ENCODE measurements at regions of chr15 and their contacts with region 1.

Region 1: DNA sequence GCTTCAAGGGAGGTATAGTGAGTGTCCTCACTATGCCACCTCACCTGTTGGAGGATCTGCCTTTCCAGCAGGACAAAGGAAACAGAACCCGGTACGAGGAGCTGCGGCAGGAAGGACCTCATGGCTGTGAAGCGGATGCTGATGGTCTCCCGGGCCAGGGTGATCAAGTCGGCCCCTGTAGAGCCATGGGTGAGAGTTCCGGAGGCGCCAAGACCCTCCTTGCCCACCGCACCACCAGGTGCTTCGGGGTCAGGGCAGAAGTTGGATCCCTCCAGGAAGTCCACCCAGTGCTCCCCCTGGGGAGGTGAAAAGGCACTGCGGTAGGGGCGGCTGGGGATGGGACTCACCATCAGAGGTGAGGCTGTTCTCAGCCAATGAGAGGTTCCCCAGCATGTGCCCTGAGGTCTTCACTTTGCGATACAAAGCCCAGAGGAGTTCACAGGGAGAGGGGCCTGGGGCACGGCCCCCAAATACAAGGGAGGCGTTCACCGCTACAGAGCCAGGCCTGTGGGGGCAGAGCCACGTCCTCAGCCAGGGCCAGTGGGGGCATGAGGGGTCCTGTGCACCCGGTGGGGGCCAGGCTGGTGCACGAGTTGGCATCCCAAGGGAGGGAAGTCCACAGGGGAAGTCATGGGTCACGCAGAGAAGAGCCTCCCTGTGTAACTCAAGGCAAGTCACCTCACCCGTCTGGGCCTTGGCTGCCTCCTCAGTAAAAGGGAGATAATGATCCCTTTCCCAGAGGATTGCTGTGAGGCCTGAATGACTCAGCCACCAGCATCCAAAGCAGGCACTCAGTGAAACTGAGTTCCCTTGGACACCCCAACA is 27.7 kb downstream of the C15orf39 start:
- DNase-seq: no peak
- ATAC-seq: no peak
- H3K4me3 ChIP-seq: no peak overlapping the region
- H3K27ac ChIP-seq: no peak overlapping the region
- H3K4me1 ChIP-seq: peaks cover 0 to 7% (median 0%) of the 10 kb centered on the region in 9 donors
- H3K27me3 ChIP-seq: peaks cover 0 to 16% (median 0%) of the 10 kb centered on the region in 7 donors
- CTCF ChIP-seq: no peak

Region 2: GRCh38 chr15:74565381-74566085 is 663.9 kb before region 1 on chr15:
- intact Hi-C with region 1: no loop called
- DNase-seq: no peak
- ATAC-seq: no peak
- H3K4me3 ChIP-seq: no peak overlapping the region
- H3K27ac ChIP-seq: no peak overlapping the region
- H3K4me1 ChIP-seq: peaks cover 0 to 12% (median 6%) of the 10 kb centered on the region in 9 donors
- H3K27me3 ChIP-seq: no peaks in the 10 kb centered on the region
- CTCF ChIP-seq: no peak

Region 3: DNA sequence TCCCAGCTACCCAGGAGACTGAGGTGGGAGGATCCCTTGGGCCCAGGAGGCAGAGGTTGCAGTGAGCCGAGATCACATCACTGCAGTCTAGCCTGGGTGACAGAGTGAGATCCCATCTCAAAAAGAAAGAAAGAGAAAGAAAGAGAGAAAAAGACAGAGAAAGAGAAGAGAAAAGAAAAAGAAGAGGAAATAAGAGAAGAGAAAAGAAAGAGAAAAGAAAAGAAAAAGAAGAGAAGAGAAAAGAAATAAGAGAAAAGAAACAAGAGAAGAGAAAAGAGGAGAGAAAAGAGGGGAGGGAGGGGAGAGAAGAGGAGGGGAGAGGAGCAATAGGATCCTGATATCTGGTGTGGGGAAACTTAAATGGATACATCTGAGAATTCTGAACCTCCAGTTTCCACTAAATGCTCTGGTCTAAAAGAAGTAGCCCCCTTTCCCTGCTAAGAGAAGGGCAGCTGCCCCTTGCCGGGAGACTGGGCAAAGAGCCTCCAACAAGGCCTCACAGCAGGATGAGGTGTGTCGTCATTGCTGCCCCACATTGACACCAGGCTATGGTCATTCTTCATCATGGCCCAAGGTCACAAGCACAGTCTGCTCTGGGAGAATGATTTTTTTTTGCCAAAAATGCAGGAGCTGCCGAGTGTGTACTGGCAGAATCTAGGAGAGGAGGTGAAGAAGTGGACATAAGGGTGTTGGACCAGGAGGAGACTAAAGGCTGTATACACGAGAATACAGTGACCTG is 85.3 kb after region 1 on chr15:
- intact Hi-C with region 1: loop called in 1 of 10 experiments (anchors 5 kb)
- DNase-seq: no peak
- ATAC-seq: no peak
- H3K4me3 ChIP-seq: no peak overlapping the region
- H3K27ac ChIP-seq: no peak overlapping the region
- H3K4me1 ChIP-seq: no peaks in the 10 kb centered on the region
- H3K27me3 ChIP-seq: peaks cover 0 to 8% (median 2%) of the 10 kb centered on the region in 7 donors
- CTCF ChIP-seq: no peak